Aorta (tissue), 5 donors: ENCODE measurements at regions of chr9 and their contacts with region 1.

Region 1: GRCh38 chr9:91193658-91194391 is 167.9 kb downstream of the AUH start:
- DNase-seq: peak; percentile 94 to 95
- ATAC-seq: peak; percentile 83
- H3K4me3 ChIP-seq: no peak overlapping the region
- H3K27ac ChIP-seq: peak overlapping the region; percentile 92 to 99
- H3K4me1 ChIP-seq: no peaks in the 10 kb centered on the region
- H3K27me3 ChIP-seq: no peaks in the 10 kb centered on the region

Region 2: GRCh38 chr9:90914868-90915483 is 278.8 kb before region 1 on chr9:
- intact Hi-C with region 1: loop called in 1 of 2 experiments (anchors 10 kb)
- DNase-seq: peak; percentile 73 to 87
- ATAC-seq: peak; percentile 89
- H3K4me3 ChIP-seq: no peak overlapping the region
- H3K27ac ChIP-seq: no peak overlapping the region
- H3K4me1 ChIP-seq: peaks cover 0 to under 1% of the 10 kb centered on the region in 2 donors
- H3K27me3 ChIP-seq: no peaks in the 10 kb centered on the region

Region 3: DNA sequence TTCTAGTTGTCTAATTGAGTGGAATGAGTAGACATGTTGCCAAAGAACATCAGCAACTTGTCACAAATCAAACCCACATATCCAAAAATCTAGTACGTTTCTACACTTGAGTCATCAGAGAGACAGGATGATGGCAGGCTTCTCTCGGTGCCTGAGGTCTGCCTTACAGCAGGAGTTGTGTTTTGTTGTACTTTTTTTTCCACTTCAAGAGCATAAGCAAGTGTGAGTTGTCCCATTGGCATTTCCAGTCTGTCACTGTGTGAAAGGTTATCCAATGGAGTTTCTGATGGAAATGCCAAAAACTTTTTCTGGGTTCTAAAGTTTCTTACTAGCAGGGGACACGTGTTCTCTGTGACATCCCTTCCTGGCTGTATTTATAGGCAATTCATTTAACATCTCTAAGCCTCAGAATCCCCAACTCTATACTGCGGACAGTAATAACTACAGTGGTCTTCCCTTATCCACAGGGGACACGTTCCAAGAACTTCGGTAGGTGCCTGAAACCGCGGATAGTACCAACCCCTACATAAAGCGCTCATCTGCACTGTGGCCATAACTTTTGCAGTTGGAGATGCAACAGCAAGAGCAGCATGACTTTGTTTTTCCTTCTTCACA is 145.7 kb before region 1 on chr9:
- intact Hi-C with region 1: no loop called
- DNase-seq: no peak
- ATAC-seq: no peak
- H3K4me3 ChIP-seq: no peak overlapping the region
- H3K27ac ChIP-seq: no peak overlapping the region
- H3K4me1 ChIP-seq: no peaks in the 10 kb centered on the region
- H3K27me3 ChIP-seq: no peaks in the 10 kb centered on the region

Region 4: GRCh38 chr9:91117959-91118703 is 75.7 kb before region 1 on chr9:
- intact Hi-C with region 1: loop called in 1 of 2 experiments (anchors 5 kb)
- DNase-seq: peak; percentile 92 to 95
- ATAC-seq: peak; percentile 96
- H3K4me3 ChIP-seq: no peak overlapping the region
- H3K27ac ChIP-seq: peak overlapping the region; percentile 72 to 83
- H3K4me1 ChIP-seq: peaks cover 0 to 2% of the 10 kb centered on the region in 2 donors
- H3K27me3 ChIP-seq: no peaks in the 10 kb centered on the region

Region 5: GRCh38 chr9:91361291-91362050 is 167.6 kb after region 1 on chr9 and contains the start of gene AUH:
- intact Hi-C with region 1: loop called in 1 of 2 experiments (anchors 5 kb)
- DNase-seq: peak; percentile 90 to 96
- ATAC-seq: peak; percentile 97
- H3K4me3 ChIP-seq: peak within 1 kb of the TSS; percentile 85 to 96
- H3K27ac ChIP-seq: peak within 1 kb of the TSS in 1 of 2 donors; percentile 58
- H3K4me1 ChIP-seq: peaks cover 0 to 2% of the 10 kb centered on the region in 2 donors
- H3K27me3 ChIP-seq: no peaks in the 10 kb centered on the region
- total RNA-seq, gene AUH: 13.7 to 25.7 TPM